Dendritic cell treated with granulocyte-macrophage colony-stimulating factor and Interleukin-4, amounts not matched to agents 40 ng/mL and 50 ng/mL, for 4 days (primary cell): ENCODE measurements at regions of chr3 and their contacts with region 1.

Region 1: DNA sequence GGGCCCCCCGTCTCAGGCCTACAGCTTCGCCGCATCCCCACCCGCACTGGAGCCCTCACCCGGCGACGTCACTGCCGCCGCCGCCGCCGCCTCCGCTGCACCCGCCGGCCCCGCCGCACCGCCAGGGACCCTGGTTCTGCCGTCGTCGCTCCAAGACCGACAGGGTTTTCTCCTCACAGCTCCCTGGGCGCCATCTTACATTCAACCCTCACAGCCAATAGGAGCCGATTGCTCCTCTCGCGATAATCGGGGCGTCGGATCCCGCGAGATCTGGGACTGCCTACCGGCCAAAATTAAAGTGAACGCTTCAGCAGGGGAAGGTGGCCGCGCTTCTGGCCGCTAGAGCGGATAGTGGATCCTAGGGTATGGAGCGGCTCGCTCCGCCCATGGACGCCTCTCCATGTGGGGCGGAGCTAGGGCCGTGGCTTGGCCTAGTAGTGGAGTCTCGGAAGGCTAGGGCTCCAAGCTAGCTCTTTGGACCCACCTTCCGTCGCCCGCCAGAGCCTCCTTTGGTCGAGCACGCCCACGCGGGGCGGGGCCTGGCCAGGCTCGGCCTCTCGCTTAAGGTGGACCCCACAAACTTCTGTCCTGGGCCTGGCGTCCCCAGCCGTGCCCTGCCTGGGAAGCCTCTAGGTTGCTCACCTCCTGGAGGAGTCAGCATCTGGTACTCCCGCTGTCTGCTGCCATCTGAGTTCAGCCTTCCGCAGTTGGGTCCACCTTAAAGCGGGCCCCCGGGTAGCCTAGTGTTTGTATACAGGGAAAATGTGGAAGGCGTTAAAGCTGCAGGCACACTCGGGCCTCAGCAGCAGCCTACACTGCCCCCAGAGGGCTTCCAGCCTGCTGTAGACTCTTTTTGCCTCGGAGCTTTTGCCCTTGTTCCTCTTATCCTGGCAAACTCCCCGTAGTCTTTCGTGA is at the start of gene QRICH1:
- H3K4me3 Mint-ChIP-seq: peak within 1 kb of the TSS; percentile 92
- H3K27ac Mint-ChIP-seq: peak within 1 kb of the TSS; percentile 98
- H3K4me1 Mint-ChIP-seq: peaks cover 31% of the 10 kb centered on the region
- H3K27me3 Mint-ChIP-seq: no peaks in the 10 kb centered on the region

Region 2: DNA sequence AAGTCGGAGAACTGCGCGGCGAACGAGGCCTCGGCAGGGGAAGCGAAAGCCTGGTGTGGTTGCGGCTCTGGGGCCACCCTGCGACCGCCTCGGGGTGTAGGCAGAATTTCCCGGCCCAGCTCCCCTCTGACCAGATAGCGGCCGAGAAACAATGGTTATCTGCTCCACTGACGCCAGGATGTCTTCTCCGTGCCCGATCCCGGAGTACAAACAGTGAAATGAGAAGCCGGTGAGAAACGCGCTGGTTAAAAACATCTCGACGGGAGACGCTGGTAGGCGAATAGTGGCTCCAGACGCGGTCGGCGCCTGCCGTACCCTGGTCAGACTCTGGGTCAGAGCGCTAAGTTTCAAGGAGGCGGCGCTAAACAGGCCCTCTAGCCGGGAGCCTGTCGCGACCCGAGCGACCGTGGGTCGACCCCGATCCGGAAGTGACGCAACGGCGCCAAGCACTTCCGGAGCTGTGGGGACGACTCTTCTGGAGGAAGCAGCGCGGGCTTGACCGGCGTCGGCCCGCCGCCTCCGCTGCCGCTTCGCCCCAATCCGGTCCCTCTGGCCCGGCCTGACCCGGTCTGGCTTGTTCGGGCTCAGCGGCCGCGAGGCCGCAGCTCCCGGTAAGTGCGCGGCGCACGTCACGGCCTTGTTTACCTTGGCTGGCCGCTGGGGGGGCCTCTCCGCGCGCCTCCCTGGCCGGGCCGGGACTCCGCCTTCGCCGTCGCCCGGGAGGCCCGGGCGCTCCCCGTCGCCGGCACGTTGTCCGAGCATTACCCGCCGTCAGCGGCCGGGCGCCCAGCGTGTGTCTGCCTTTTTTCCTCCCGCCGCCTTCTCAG is 175.5 kb before region 1 on chr3 and contains the start of gene ARIH2:
- intact Hi-C with region 1: loop called (anchors 5 kb)
- H3K4me3 Mint-ChIP-seq: peak within 1 kb of the TSS; percentile 95
- H3K27ac Mint-ChIP-seq: peak within 1 kb of the TSS; percentile 97
- H3K4me1 Mint-ChIP-seq: peaks cover 21% of the 10 kb centered on the region
- H3K27me3 Mint-ChIP-seq: no peaks in the 10 kb centered on the region

Region 3: DNA sequence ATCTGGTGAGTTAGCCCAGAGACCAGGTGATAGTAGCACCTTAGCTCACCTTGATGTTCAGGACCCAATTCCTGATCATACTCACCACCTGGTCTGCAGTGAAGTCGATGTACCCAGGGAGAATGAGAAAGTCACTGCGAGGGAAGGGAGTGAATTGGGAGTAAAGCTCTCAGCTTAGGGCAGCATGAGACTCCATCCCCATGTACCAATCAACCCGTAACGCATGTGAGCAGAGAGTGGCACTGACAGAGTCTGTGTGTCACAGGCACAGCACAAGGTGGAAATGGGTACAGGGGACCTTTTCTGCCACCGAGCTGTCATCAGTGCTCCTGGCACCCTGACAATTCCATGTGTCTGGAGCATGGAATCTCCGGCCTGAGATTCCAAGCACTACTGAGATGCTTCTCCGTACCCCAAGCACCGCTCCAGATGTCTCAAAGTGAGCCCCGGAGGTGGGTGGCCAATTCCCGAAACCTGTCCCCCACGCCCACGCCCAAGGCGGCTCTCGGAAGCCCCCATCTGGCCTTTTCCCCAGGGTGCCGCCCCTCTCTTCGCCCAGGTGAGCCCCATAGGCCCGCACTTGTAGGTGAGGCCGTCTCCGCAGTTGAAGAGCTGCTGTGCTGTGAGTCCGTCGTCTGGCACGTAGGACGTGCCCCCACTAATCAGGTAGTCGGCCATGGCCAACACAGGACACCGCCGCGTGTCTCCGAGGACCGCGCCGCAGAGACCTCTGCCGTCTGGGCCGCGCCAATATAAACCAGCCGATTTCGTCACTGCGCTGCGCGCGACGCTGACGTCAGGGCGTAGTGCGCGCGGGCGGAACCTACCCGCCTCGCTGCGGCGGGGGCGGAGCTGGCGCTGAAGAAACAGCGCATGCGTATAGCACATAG is 65.2 kb before region 1 on chr3 and contains the start of gene IMPDH2:
- intact Hi-C with region 1: loop called (anchors 5 kb)
- H3K4me3 Mint-ChIP-seq: peak within 1 kb of the TSS; percentile 81
- H3K27ac Mint-ChIP-seq: peak within 1 kb of the TSS; percentile 89
- H3K4me1 Mint-ChIP-seq: peaks cover 53% of the 10 kb centered on the region
- H3K27me3 Mint-ChIP-seq: no peaks in the 10 kb centered on the region

Region 4: GRCh38 chr3:49104483-49105291 is 10.6 kb after region 1 on chr3 and contains the start of gene QARS1:
- intact Hi-C with region 1: loop called (anchors 1 kb)
- H3K4me3 Mint-ChIP-seq: peak within 1 kb of the TSS; percentile 98
- H3K27ac Mint-ChIP-seq: peak within 1 kb of the TSS; percentile 96
- H3K4me1 Mint-ChIP-seq: peaks cover 30% of the 10 kb centered on the region
- H3K27me3 Mint-ChIP-seq: no peaks in the 10 kb centered on the region

Region 5: GRCh38 chr3:49120438-49121131 is 26.5 kb after region 1 on chr3 and contains the start of gene USP19:
- intact Hi-C with region 1: loop called (anchors 1 kb)
- H3K4me3 Mint-ChIP-seq: peak within 1 kb of the TSS; percentile 80
- H3K27ac Mint-ChIP-seq: peak within 1 kb of the TSS; percentile 82
- H3K4me1 Mint-ChIP-seq: peaks cover 28% of the 10 kb centered on the region
- H3K27me3 Mint-ChIP-seq: no peaks in the 10 kb centered on the region

Region 6: GRCh38 chr3:49133226-49133951 is 39.3 kb after region 1 on chr3:
- intact Hi-C with region 1: loop called (anchors 2 kb)
- H3K4me3 Mint-ChIP-seq: peak overlapping the region; percentile 79
- H3K27ac Mint-ChIP-seq: peak overlapping the region; percentile 86
- H3K4me1 Mint-ChIP-seq: peaks cover 26% of the 10 kb centered on the region
- H3K27me3 Mint-ChIP-seq: peaks cover 7% of the 10 kb centered on the region